ENCODE measurements at regions of chr17 and their contacts with region 1.

Region 1: GRCh38 chr17:2336215-2336851 is at the start of gene TSR1:
- DNase-seq: peak; percentile 98
- H3K4me3 Mint-ChIP-seq: no peak within 1 kb of the TSS
- H3K27ac Mint-ChIP-seq: peak within 1 kb of the TSS; percentile 96
- H3K4me1 Mint-ChIP-seq: peaks cover 14% of the 10 kb centered on the region
- H3K27me3 Mint-ChIP-seq: no peaks in the 10 kb centered on the region
- total RNA-seq, gene TSR1: 97.9 and 99.3 TPM in 2 replicates

Region 2: DNA sequence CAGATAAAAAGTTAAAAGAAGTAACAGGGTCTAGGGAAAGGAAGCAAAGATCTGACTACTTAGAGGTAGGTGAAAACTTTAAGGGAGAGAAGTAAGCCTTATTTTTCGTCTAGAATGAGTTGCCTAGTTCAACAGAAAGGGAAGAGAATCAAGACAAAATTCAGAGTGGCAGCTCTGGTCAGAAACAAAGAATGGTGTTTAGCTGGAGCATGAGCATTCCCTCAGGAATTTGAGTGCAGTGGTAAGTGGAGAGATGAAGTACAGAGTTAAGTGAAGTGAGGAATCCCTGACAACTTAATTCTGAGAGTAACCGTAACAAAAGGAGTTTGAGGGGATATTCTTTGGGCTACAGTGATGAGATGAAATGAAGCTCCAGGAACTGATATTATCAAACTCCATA is 44.2 kb before region 1 on chr17:
- intact Hi-C with region 1: no loop called
- DNase-seq: no peak
- H3K4me3 Mint-ChIP-seq: no peak overlapping the region
- H3K27ac Mint-ChIP-seq: no peak overlapping the region
- H3K4me1 Mint-ChIP-seq: peaks cover 25% of the 10 kb centered on the region
- H3K27me3 Mint-ChIP-seq: no peaks in the 10 kb centered on the region

Region 3: GRCh38 chr17:2303204-2304188 is 32.8 kb before region 1 on chr17 and contains the starts of genes SMG6 and SRR:
- intact Hi-C with region 1: loop called (anchors 1 kb)
- DNase-seq: peak; percentile 97
- H3K4me3 Mint-ChIP-seq: peak within 1 kb of the TSS; percentile 91
- H3K27ac Mint-ChIP-seq: peak within 1 kb of the TSS; percentile 84
- H3K4me1 Mint-ChIP-seq: peaks cover 35% of the 10 kb centered on the region
- H3K27me3 Mint-ChIP-seq: no peaks in the 10 kb centered on the region
- total RNA-seq, gene SMG6: 31.6 and 36.2 TPM in 2 replicates
- total RNA-seq, gene SRR: 13.8 and 15.6 TPM in 2 replicates

Region 4: DNA sequence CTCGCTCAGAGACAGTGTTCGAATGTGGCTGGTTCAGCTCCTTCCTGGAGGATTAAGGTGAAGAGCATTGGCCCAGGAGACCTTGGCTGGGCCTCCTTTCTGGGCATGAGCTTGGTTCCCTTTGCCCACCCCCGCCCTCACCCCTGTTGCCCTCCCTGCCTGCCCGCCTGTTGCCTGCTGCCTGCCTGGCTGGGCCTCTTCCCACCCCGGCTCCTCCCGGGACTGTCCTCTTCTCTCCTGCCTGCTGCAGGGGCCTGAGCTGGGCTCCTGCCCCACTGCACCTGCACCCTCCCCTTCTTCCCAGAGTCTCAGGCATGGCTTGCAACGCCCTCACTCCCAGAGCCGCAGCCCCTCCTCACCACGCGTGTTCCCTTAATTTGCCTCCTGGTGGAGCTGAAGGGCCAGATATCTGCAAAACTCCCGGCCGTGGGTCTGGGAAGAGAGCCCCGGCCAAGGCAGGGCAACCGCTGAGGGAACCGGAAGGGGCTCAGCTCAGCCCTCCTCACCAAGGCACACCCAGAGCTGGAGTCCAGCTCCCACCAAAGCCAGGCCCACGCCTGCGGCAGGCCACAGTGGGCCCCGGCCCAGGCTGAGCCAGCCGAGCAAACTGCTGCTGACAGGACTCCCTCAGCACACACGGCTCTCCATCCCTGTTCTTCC is 33.3 kb after region 1 on chr17:
- intact Hi-C with region 1: no loop called
- DNase-seq: no peak
- H3K4me3 Mint-ChIP-seq: no peak overlapping the region
- H3K27ac Mint-ChIP-seq: no peak overlapping the region
- H3K4me1 Mint-ChIP-seq: no peaks in the 10 kb centered on the region
- H3K27me3 Mint-ChIP-seq: no peaks in the 10 kb centered on the region

Region 5: GRCh38 chr17:2392252-2393173 is 56.2 kb after region 1 on chr17:
- intact Hi-C with region 1: loop called (anchors 2 kb)
- DNase-seq: peak; percentile 100
- H3K4me3 Mint-ChIP-seq: peak overlapping the region; percentile 91
- H3K27ac Mint-ChIP-seq: peak overlapping the region; percentile 93
- H3K4me1 Mint-ChIP-seq: peaks cover 44% of the 10 kb centered on the region
- H3K27me3 Mint-ChIP-seq: no peaks in the 10 kb centered on the region

Region 6: GRCh38 chr17:2511462-2512369 is 175.4 kb after region 1 on chr17 and contains the start of gene METTL16:
- intact Hi-C with region 1: loop called (anchors 1 kb)
- DNase-seq: peak; percentile 99
- H3K4me3 Mint-ChIP-seq: peak within 1 kb of the TSS; percentile 56
- H3K27ac Mint-ChIP-seq: no peak within 1 kb of the TSS
- H3K4me1 Mint-ChIP-seq: peaks cover 13% of the 10 kb centered on the region
- H3K27me3 Mint-ChIP-seq: peaks cover 3% of the 10 kb centered on the region
- total RNA-seq, gene METTL16: 59.5 and 61.1 TPM in 2 replicates

Measured in activated CD4-positive, alpha-beta T cell treated with anti-CD3 and anti-CD28 coated beads, Interleukin-2, amount 10 ng/mL, durations not matched to agents 24 days and 14 days (primary cell).